ENCODE measurements at regions of chr7 and their contacts with region 1.

Region 1: GRCh38 chr7:115618676-115619075 is 411.9 kb downstream of the TFEC start:
- DNase-seq: peak; percentile 60
- ATAC-seq: peak; percentile 92
- H3K4me3 ChIP-seq: no peak overlapping the region
- H3K27ac ChIP-seq: no peak overlapping the region
- H3K4me1 ChIP-seq: peaks cover 15% of the 10 kb centered on the region
- H3K27me3 ChIP-seq: no peaks in the 10 kb centered on the region
- CTCF ChIP-seq: no peak

Region 2: DNA sequence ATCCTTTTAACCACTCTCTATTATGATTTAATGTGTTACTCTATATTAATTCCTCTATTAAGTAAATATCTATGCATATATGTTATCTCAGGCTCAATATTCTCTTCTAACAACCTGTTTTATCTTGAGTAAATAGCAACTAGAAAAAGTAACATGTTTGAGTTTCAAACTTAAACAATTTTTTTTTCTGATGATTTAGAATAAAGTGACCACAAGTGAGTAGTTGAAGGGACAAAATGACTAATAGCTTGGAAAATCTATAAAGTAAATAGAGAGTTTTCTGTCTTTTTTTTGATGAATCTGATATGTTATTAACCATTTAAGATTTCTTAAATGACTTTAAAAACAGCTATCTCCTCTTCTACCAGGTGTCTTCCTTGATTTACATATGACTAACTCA is 71.9 kb before region 1 on chr7:
- CTCF ChIA-PET with region 1: no interaction called
- POLR2A ChIA-PET with region 1: no interaction called
- intact Hi-C with region 1: loop called (anchors 1 kb)
- DNase-seq: peak; percentile 61
- ATAC-seq: peak; percentile 73
- H3K4me3 ChIP-seq: no peak overlapping the region
- H3K27ac ChIP-seq: no peak overlapping the region
- H3K4me1 ChIP-seq: peaks cover 16% of the 10 kb centered on the region
- H3K27me3 ChIP-seq: no peaks in the 10 kb centered on the region
- CTCF ChIP-seq: no peak

Measured in PC-3 (cell line).